Heart right ventricle (tissue), 16 donors: ENCODE measurements at regions of chr11 and their contacts with region 1.

Region 1: GRCh38 chr11:72024069-72024754 is 25.5 kb downstream of the IL18BP start:
- DNase-seq: no peak
- ATAC-seq: no peak
- H3K4me3 ChIP-seq: no peak overlapping the region
- H3K27ac ChIP-seq: peak overlapping the region in 1 of 10 donors; percentile 27
- H3K4me1 ChIP-seq: peaks cover 3 to 53% (median 37%) of the 10 kb centered on the region in 9 donors
- H3K27me3 ChIP-seq: no peaks in the 10 kb centered on the region
- CTCF ChIP-seq: no peak

Region 2: DNA sequence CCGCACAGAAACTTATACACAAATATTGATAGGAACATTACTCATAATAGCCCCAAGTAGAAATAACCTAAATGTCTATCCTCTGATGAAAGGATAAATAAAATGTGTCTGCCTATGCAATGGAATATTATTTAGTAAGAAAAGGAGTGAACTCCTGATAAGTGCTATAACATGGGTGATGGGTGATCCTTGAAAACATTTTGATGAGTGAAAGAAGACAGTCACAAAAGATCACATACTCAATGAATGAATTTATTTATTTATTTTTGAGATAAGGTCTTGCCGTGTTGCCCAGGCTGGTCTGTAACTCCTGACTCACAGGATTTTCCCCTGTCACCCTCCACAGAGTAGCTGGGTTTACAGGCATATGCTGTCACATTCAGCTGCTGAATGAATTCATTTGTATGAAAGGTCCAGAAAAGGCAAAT is 78.1 kb before region 1 on chr11:
- intact Hi-C with region 1: no loop called
- DNase-seq: no peak
- ATAC-seq: no peak
- H3K4me3 ChIP-seq: no peak overlapping the region
- H3K27ac ChIP-seq: no peak overlapping the region
- H3K4me1 ChIP-seq: peaks cover 0 to 36% (median 5%) of the 10 kb centered on the region in 9 donors
- H3K27me3 ChIP-seq: no peaks in the 10 kb centered on the region
- CTCF ChIP-seq: no peak

Region 3: DNA sequence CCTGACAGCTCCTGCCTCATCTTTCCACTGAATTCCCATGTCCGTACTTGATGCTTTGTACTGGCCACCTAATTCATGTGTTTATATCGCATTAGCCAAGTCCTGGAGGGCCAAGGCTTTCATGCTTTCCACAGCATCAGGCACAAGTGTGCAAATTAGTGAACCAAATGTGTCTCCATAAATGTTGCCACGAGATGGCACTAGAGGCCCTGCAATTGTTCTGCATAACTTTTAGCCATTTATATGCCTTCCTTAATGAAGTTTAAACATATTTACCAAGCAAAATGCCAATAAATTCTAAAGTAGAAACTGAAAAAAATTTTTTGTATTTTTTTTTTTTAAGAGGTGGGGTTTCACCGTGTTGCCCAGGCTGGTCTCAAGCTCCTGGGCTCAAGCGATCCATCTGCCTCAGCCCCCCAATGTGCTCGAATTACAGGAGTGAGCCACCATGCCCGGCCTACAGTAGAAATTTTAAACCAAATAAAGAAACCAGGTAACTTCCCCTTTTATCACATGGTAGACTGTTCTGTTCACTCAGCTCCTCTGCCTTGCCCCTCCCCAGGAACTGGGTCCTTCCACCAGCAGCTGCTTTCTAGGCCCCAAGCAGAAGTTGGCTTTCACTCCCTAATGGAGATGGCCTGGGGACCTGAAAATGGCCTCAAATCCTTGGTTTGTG is 46.3 kb before region 1 on chr11:
- intact Hi-C with region 1: loop called in 1 of 10 experiments (anchors 5 kb)
- DNase-seq: peak in 1 of 2 donors; percentile 45
- ATAC-seq: peak in 6 of 8 donors; percentile 35 to 81 (median 68)
- H3K4me3 ChIP-seq: no peak overlapping the region
- H3K27ac ChIP-seq: peak overlapping the region in 1 of 10 donors; percentile 41
- H3K4me1 ChIP-seq: peaks cover 0 to 6% (median 0%) of the 10 kb centered on the region in 9 donors
- H3K27me3 ChIP-seq: no peaks in the 10 kb centered on the region
- CTCF ChIP-seq: peak; percentile 59 to 83 (median 74)